Panc1 (cell line): ENCODE measurements at regions of chr3 and their contacts with region 1.

Region 1: DNA sequence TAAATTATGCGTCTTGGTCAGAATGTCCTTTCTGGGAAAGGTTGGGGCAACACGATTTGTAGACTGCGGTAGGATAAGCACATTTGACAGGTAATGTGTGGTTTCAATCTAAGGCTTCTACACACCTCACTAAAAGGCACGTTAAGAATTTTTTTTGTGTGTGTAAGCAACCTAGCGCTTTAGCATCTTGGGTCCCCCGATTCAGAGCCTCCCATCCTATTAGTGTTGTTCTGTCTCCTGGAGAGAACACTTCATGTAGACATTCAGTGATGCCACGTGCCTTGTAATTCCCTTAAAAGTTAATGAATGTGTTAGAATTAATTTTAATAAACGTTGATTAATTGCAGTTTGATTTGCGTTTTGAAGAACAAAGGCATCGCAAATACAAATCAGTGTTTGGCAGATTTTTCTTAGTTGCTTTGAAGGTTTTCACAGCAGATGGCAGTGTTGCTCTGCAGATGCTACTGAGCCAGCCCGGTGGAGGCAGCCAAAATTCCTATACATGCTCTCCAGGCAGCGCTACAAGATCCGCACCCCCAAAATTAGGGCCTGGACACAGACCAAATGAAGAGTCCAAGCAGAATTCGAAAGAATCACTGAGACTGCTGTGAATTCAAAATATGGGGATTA is 63.5 kb downstream of the OTOL1 start:
- DNase-seq: peak; percentile 33
- ATAC-seq: peak; percentile 86
- H3K4me3 ChIP-seq: no peak overlapping the region
- H3K27ac ChIP-seq: no peak overlapping the region
- H3K4me1 ChIP-seq: 0 out of 2 replicates have a peak, but pooled peaks cover 3% of the 10 kb centered on the region
- H3K27me3 ChIP-seq: peaks cover 3% of the 10 kb centered on the region; the same call in 1 of the 2 replicates
- CTCF ChIP-seq: peak; percentile 69

Region 2: GRCh38 chr3:161851941-161852566 is 291.9 kb after region 1 on chr3:
- CTCF ChIA-PET with region 1: no interaction called
- POLR2A ChIA-PET with region 1: no interaction called
- in situ Hi-C with region 1: no loop called
- intact Hi-C with region 1: loop called (anchors 10 kb)
- DNase-seq: peak; percentile 52
- ATAC-seq: peak; percentile 78; the same call in 1 of the 2 replicates
- H3K4me3 ChIP-seq: no peak overlapping the region
- H3K27ac ChIP-seq: no peak overlapping the region
- H3K4me1 ChIP-seq: no peaks in the 10 kb centered on the region
- H3K27me3 ChIP-seq: no peaks in the 10 kb centered on the region
- CTCF ChIP-seq: peak; percentile 92

Region 3: DNA sequence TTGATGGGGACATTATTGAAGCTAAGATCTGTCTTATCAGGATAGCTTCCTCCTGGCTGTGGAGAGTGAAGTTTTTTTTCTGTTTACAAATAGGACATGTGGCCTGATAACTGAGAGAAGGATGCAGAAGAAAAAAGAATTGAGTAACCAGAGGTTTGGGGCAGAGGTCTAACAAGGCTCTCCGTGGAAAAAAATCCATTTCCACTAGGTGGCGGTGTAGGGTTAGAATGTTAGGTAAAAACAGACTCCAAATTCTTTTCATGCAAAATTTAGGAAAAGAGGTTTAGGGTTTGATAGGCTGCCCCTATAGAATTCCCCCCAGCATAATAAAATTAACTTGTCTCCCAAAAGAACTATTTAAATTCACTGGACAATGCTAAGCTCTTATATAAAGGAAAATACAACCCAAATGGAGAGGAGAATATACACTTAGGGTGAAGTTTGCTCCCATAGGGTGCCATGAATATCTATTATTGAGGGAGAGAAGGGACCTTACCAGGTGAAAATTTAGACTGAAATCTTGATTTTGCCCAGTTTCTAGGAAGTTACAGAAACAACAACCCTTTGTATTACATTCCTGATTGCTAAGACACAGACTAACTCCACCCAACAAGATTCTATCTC is 1496.9 kb after region 1 on chr3:
- CTCF ChIA-PET with region 1: no interaction called
- POLR2A ChIA-PET with region 1: no interaction called
- in situ Hi-C with region 1: no loop called
- intact Hi-C with region 1: loop called (anchors 10 kb)
- DNase-seq: peak; percentile 22
- ATAC-seq: no peak
- H3K4me3 ChIP-seq: no peak overlapping the region
- H3K27ac ChIP-seq: no peak overlapping the region
- H3K4me1 ChIP-seq: no peaks in the 10 kb centered on the region
- H3K27me3 ChIP-seq: no peaks in the 10 kb centered on the region
- CTCF ChIP-seq: peak; percentile 67; the same call in 1 of the 2 replicates